Calu3 (cell line): ENCODE measurements at regions of chr9 and their contacts with region 1.

Region 1: GRCh38 chr9:112601636-112602035 is 115.0 kb downstream of the KIAA1958 start:
- DNase-seq: no peak
- H3K4me3 Mint-ChIP-seq: no peak overlapping the region
- H3K27ac Mint-ChIP-seq: no peak overlapping the region
- H3K4me1 Mint-ChIP-seq: no peaks in the 10 kb centered on the region
- H3K27me3 Mint-ChIP-seq: no peaks in the 10 kb centered on the region
- CTCF ChIP-seq: no peak

Region 2: GRCh38 chr9:112002131-112002846 is 599.3 kb before region 1 on chr9:
- CTCF ChIA-PET with region 1: no interaction called
- intact Hi-C with region 1: no loop called
- DNase-seq: no peak
- H3K4me3 Mint-ChIP-seq: no peak overlapping the region
- H3K27ac Mint-ChIP-seq: no peak overlapping the region
- H3K4me1 Mint-ChIP-seq: no peaks in the 10 kb centered on the region
- H3K27me3 Mint-ChIP-seq: no peaks in the 10 kb centered on the region
- CTCF ChIP-seq: no peak

Region 3: DNA sequence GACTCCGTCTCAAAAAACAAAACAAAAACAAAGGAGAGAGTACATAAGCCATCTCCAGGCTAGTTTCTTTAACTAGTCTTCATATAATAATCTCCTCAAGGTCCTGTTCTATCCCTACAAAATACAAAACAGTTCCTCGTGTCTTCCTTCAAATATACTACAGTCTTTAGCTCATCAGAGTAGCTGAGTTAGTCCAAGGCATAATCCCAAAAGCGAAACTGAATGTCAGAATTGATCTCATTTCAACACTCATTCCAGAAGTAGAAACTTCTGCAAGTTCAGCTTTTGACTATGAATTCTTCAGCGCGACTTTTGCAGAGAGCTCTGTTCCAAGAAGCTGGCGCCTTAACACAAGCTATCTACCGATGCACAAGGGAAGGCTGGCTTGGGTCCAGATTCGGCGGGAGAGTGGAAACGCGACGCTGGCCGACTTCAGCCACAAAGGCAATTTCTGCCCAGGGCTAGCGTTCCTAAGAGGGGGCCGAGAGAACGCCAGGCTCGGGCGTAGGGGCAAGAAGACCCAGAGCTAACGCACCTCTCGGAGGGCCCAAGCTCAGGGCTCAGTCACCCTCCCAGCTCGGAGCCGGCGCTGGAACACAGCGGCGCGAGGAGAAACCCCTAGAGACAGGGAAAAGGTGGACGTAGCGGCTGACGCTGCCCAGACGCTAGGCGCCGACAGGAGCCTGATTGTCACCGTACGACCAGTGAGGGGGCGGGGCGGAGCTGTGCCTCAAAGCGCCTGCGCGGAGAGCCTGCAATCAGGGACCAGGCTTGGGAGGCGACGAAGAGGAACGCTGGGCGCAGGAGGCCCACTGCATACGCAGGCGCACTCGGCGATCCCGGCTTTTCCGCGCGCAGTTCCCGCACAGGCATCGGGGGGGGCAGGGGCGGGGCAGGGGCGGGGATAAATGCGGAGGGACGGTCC is 222.2 kb before region 1 on chr9:
- CTCF ChIA-PET with region 1: no interaction called
- intact Hi-C with region 1: no loop called
- DNase-seq: peak; percentile 97
- H3K4me3 Mint-ChIP-seq: peak overlapping the region; percentile 94
- H3K27ac Mint-ChIP-seq: peak overlapping the region; percentile 86
- H3K4me1 Mint-ChIP-seq: peaks cover 20% of the 10 kb centered on the region
- H3K27me3 Mint-ChIP-seq: no peaks in the 10 kb centered on the region
- CTCF ChIP-seq: no peak

Region 4: DNA sequence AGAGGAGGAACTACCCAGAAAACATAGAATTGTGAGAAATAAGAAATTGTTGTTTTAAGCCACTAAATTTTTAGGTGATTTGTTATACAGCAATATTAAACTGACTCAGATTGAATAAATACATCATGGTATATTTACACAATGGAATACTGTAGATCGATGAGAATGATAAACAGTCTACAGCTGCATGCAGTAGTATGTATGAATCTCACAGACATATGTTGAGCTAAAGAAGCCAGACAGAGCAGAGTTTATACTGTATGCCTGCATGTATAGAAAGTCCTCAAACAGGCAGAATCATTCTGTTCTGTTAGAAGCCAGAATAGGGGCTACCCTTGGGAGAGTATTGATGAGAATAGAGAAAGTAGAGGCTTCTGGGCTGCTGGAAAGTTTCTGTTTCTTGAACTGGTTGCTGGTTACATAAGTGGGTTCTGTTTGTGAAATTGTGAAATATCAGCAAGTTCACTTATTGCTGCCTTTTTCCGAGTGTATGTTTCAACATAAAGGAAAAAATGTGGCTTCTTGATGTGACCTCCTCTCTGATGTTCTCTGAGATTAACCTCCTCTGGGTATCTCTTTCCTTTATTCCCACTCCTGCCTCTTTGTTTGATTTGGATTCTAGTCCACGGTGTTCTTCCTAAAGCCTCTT is 105.4 kb before region 1 on chr9:
- CTCF ChIA-PET with region 1: no interaction called
- intact Hi-C with region 1: loop called (anchors 5 kb)
- DNase-seq: no peak
- H3K4me3 Mint-ChIP-seq: no peak overlapping the region
- H3K27ac Mint-ChIP-seq: no peak overlapping the region
- H3K4me1 Mint-ChIP-seq: peaks cover 2% of the 10 kb centered on the region
- H3K27me3 Mint-ChIP-seq: no peaks in the 10 kb centered on the region
- CTCF ChIP-seq: no peak

Region 5: DNA sequence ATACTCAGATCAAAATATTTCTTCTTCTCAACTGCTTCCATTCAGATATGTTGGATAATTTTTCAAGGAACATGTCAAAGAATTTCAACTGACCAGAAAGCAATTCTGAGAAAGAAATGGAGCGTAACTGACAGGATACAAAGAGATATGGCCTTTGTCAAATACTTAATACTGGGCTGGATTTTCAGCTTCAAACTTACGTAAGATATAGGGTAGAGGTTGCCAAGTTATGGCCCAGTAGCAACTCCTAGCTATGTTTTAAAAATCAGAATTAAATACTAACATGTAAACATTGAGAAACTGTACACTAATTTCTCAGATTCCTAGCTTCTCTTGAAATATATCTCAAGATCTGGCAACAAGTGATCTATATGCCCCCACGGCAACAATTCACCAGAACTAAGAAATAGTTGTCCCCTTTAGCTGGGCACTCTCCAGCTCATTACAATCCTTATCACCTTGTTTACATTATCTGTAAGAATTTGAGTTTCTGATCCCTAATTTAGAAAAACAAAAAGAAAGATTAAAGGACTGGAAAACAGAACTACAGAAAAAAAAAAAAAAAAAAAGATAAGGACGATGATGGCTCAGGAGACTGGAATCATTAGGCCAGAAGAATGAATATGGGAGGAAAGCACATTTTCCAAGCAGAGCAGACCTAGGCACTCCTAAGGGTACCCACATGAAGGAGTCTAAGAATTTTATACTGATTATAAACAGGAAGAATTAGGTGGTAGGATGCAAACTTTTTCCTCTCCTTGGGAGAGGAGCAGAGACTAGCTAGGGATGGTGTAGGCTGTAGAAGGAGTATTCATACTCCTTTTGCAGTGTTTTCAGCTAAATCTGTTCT is 93.3 kb after region 1 on chr9:
- CTCF ChIA-PET with region 1: no interaction called
- intact Hi-C with region 1: no loop called
- DNase-seq: no peak
- H3K4me3 Mint-ChIP-seq: no peak overlapping the region
- H3K27ac Mint-ChIP-seq: no peak overlapping the region
- H3K4me1 Mint-ChIP-seq: no peaks in the 10 kb centered on the region
- H3K27me3 Mint-ChIP-seq: no peaks in the 10 kb centered on the region
- CTCF ChIP-seq: no peak